A673 (cell line): ENCODE measurements at regions of chr2 and their contacts with region 1.

Region 1: GRCh38 chr2:189002079-189002478 is 27.9 kb downstream of the COL3A1 start:
- DNase-seq: peak; percentile 89
- H3K4me3 ChIP-seq: no peak overlapping the region
- H3K27ac ChIP-seq: peak overlapping the region; percentile 55
- H3K4me1 ChIP-seq: peaks cover 26% of the 10 kb centered on the region
- H3K27me3 ChIP-seq: no peaks in the 10 kb centered on the region
- CTCF ChIP-seq: no peak

Region 2: GRCh38 chr2:189425676-189426075 is 423.6 kb after region 1 on chr2:
- CTCF ChIA-PET with region 1: no interaction called
- POLR2A ChIA-PET with region 1: no interaction called
- intact Hi-C with region 1: loop called (anchors 5 kb)
- DNase-seq: peak; percentile 98
- H3K4me3 ChIP-seq: no peak overlapping the region
- H3K27ac ChIP-seq: peak overlapping the region; percentile 73
- H3K4me1 ChIP-seq: peaks cover 28% of the 10 kb centered on the region
- H3K27me3 ChIP-seq: no peaks in the 10 kb centered on the region
- CTCF ChIP-seq: no peak